GM10248 (cell line): ENCODE measurements at regions of chr10 and their contacts with region 1.

Region 1: DNA sequence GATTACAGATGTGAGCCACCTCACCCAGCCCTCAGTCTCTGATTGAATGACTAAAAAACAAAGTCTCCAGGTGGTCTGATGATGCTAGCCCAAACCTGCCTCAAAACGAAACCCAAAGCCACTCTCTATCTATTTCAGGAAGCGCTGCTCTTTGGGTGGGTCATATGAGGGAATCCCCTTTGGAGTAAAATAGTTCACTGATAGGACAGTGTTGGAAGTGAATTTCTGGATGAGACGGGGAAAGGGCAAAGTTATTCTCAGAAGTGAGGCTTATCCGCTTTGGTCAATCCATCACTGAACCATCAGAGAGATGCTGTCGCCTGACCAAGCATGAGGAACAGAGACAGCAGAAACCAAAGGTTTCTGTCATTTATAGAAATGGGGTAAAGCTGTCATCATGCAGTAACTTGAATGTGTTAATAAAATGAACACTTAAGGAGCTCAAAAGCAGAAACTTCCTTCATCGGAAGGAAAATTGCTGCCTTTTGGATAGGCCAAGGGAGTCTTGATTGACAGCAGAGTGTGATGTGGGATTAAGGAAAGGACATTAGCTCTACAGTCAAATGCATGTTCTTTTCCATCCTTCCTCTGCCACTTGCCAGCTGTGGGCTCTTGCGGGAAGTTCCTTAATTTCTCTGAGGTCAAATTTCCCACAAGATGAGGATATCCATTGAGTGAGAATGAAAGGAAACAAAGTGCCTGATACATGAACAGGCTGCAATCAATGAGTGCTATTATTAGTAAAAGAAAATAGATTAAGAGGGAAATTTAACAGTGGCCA is 64.9 kb upstream of the C1QL3 start:
- DNase-seq: peak; percentile 51
- CTCF ChIP-seq: no peak

Region 2: DNA sequence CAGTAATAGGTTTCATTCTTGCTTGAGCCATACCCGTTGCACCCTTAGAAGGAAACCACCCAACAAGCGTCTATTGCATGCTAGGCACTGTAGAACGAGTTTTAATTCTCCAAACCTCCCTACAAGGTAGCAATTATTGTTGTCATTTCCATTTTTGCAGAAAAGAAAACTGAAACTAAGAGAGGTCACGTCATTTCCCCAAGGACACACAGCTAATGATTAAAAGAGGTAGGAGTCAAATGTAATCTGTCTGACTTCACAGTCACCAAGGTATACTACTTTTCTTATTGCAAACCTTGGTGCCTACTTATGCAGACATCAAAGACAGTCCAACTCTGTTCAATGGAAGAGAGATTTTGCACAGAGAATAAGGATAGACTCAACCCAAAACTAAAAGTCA is 15.8 kb before region 1 on chr10:
- CTCF ChIA-PET with region 1: interaction called, 13 read pairs
- POLR2A ChIA-PET with region 1: no interaction called
- DNase-seq: peak; percentile 45
- CTCF ChIP-seq: no peak

Region 3: GRCh38 chr10:16597656-16598055 is 11.1 kb after region 1 on chr10:
- CTCF ChIA-PET with region 1: no interaction called
- POLR2A ChIA-PET with region 1: no interaction called
- DNase-seq: no peak
- CTCF ChIP-seq: no peak